Ovary (tissue), 10 donors: ENCODE measurements at regions of chr11 and their contacts with region 1.

Region 1: DNA sequence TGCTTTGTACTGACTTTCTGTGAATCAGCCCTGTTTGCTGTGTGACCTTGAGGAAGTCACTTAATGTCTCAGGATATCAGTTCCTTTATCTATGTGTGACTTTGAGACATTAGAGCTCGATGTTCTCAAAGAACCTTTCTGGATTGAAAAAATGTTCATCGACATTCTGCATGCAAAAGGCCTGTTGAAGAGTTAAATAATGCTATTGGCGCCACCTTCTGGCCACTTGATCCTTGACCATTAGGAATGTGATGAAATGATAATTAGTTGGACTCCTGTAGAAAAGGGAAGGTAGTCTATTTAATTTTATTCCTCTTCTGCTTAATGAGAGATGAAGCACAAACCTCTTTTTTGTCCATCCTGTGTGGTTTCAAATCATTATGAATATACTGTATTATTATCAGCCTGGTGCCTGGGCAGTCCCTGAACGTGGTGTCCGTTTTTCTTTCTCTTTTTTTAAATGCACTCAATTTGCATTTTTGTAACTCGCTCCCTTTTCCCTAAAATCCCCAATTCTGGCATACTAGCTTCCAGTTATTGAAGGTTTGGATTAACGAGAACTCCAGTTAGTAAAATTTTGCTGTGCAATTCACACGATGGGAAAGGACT is 20.7 kb downstream of the ELF5 start:
- DNase-seq: peak; percentile 13 to 61 (median 46)
- H3K4me3 ChIP-seq: no peak overlapping the region
- H3K27ac ChIP-seq: no peak overlapping the region
- H3K4me1 ChIP-seq: no peaks in the 10 kb centered on the region
- H3K27me3 ChIP-seq: no peaks in the 10 kb centered on the region
- CTCF ChIP-seq: peak in 2 of 3 donors; percentile 21 to 52
- EP300 ChIP-seq: no peak
- POLR2A ChIP-seq: no peak

Region 2: GRCh38 chr11:34366522-34366921 is 126.4 kb before region 1 on chr11:
- intact Hi-C with region 1: loop called in 1 of 4 experiments (anchors 10 kb)
- DNase-seq: no peak
- H3K4me3 ChIP-seq: no peak overlapping the region
- H3K27ac ChIP-seq: no peak overlapping the region
- H3K4me1 ChIP-seq: no peaks in the 10 kb centered on the region
- H3K27me3 ChIP-seq: no peaks in the 10 kb centered on the region
- CTCF ChIP-seq: no peak
- EP300 ChIP-seq: no peak
- POLR2A ChIP-seq: no peak